BJ (cell line): ENCODE measurements at regions of chr1 and their contacts with region 1.

Region 1: GRCh38 chr1:210584439-210585113 is 255.9 kb downstream of the HHAT start:
- DNase-seq: no peak
- H3K4me3 ChIP-seq: no peak overlapping the region
- H3K27me3 ChIP-seq: no peaks in the 10 kb centered on the region
- CTCF ChIP-seq: peak; percentile 78

Region 2: DNA sequence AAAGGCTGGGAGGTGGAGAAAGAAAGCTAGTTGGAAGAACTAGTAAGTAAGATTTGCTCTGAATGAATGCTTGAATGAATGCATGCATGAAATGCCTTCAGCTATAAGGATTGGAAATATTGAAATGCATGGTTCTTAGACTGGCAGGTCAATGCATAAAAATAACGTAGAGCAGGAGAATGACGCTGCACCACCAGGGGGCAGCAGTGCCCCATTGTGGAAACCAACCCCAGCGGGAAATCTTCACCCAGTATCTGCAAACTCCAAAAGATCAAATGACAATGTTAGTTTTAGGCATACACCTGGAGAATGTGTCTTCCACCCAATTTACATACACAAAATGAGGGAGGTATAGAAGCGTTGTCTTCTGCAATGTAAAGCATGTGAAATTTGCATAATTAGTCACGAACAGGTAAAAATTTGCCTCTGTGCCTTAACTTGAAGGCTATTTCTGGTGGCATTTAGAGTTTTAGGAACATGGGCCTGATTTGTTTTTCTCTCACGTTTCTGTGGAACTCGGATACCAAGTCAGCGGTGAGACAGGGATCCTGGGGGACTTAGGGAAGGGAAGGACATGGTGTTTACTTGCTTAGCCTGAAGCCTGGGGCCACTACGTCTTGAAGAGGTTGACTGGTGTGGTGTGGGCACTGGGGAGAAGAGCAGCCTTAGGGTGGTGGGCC is 177.2 kb before region 1 on chr1:
- CTCF ChIA-PET with region 1: interaction called, 18 read pairs
- POLR2A ChIA-PET with region 1: no interaction called
- DNase-seq: no peak
- H3K4me3 ChIP-seq: no peak overlapping the region
- H3K27me3 ChIP-seq: no peaks in the 10 kb centered on the region; the same call in 1 of the 2 replicates
- CTCF ChIP-seq: peak; percentile 96

Region 3: DNA sequence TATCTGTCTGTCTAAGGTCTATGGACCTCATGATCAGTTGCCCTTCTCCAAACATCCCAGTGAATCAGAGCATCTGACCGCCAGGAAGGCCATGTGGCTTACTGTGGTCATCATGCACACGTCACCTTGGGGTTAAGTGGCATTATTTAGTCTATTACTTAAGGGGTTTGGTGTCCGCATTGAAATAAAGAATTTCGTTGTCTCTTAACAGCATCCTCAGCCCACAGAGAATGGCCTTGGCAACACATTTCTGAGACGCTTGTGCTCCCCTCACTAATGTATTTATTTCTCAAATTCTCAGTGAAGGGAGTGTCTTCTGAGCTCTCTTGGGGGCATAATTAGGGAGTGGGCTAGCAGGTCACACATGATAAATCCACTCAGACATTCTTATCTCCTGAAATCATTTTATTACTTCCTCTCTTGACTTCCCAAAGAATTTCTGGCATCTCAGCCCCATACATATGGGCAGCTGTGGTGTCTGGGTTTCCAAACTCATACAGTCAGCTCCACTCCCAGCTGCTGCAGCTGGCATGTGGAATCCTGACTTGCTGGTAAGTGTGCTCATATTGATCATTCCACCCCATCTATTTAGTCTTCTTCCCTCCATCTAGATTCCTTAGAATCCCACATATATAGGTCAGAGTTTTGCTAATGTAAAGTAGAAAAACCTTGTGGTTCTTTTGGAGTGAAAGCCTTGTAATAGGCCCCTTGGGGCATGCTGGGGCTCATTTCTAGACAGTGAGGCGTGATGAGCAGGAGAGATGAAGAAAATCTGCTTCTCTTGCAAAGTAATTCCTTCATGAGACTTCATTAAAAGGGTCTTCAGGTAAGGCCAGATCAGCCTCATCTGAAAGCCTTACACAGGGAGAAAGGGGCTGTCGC is 145.4 kb before region 1 on chr1:
- CTCF ChIA-PET with region 1: interaction called, 13 read pairs
- POLR2A ChIA-PET with region 1: no interaction called
- DNase-seq: peak; percentile 100
- H3K4me3 ChIP-seq: no peak overlapping the region
- H3K27me3 ChIP-seq: no peaks in the 10 kb centered on the region
- CTCF ChIP-seq: no peak

Region 4: GRCh38 chr1:210448297-210448892 is 136.2 kb before region 1 on chr1:
- CTCF ChIA-PET with region 1: interaction called, 60 read pairs
- POLR2A ChIA-PET with region 1: no interaction called
- DNase-seq: no peak
- H3K4me3 ChIP-seq: no peak overlapping the region
- H3K27me3 ChIP-seq: no peaks in the 10 kb centered on the region
- CTCF ChIP-seq: peak; percentile 70

Region 5: GRCh38 chr1:210568631-210569030 is 15.9 kb before region 1 on chr1:
- CTCF ChIA-PET with region 1: interaction called, 12 read pairs
- POLR2A ChIA-PET with region 1: no interaction called
- DNase-seq: no peak
- H3K4me3 ChIP-seq: no peak overlapping the region
- H3K27me3 ChIP-seq: no peaks in the 10 kb centered on the region
- CTCF ChIP-seq: no peak

Region 6: DNA sequence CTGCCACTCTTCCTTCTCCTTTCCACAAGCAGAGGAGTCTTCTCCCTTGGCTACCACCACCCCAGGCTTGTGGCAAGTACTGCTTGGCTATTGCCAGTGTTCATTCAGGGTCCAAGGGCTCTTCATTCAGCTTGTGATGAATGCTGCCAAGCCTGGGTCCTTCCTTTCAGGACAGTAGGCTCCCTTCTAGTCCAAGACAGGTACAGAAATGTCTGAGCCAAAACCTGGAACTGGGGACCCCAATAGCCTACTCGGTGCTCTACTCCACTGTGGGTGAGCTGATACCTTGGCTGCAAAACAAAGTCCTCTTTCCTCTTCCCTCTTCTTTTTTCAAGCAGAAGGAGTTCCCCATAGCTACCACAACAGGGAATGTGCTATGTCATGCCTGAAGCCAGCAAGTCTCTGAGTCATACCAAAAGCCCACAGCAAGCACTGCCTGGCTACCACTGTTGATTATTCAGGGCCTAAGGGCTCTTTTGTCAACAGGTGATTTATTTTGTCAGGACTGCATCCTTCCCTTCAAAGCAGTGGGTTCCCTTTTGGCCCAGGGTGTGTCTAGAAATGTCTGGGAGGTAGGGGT is 13.1 kb after region 1 on chr1:
- CTCF ChIA-PET with region 1: interaction called, 27 read pairs
- POLR2A ChIA-PET with region 1: no interaction called
- DNase-seq: peak; percentile 81
- H3K4me3 ChIP-seq: no peak overlapping the region
- H3K27me3 ChIP-seq: no peaks in the 10 kb centered on the region
- CTCF ChIP-seq: no peak